ENCODE measurements at regions of chr3 and their contacts with region 1.

Region 1: DNA sequence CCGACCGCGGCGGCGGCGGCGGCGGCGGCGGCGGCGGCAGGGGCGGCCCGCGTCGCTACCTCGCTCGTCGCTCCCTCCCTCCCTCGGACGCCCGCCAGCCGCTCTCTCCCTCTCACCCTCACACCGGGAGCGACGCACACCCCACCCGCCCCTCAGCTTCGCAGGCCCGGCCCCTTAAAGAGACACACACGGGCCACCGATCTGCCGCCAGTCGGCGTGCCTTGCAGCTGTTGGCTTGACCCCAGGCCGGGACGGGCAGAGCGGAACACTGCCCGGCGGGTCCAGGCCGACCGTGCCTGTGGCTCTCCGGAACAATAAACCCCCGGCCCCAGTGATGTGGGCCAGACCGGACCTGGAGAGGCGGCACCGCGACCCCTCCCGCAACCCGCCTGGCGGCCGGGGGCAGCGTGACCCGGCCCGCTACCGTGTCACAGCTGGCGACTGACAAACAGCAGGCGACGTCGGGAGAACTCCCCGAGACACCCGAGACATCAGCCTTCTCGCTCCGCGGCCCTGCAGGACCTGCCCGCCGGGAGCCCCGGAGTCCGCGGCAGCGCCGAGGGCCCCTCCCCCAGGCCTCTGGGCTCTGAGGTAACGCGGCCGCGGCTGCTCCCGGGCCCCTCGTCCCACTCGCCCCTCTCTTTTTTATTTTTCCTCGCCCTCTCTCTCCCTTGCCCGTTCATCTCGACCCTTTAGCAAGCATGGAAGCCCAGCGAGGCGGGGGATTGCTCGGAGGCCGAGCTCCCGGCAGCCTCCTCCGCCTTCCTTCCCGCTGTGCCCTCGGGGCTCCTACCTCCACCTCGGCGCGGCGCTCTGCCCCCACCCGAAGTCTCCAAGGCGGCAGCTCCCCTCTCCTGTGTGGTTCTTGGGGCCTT is at the start of gene SETD2:
- DNase-seq: peak; percentile 90
- H3K4me3 ChIP-seq: peak within 1 kb of the TSS; percentile 58 to 97 (median 88)
- H3K27ac ChIP-seq: peak within 1 kb of the TSS; percentile 78
- H3K4me1 ChIP-seq: peaks cover 19% of the 10 kb centered on the region
- H3K27me3 ChIP-seq: no peaks in the 10 kb centered on the region
- CTCF ChIP-seq: peak in 1 of 2 donors; percentile 21
- POLR2A ChIP-seq: peak; percentile 31
- total RNA-seq, gene SETD2: 36.2 and 41.4 TPM in 2 replicates

Region 2: GRCh38 chr3:47261301-47261700 is 97.1 kb after region 1 on chr3:
- CTCF ChIA-PET with region 1: no interaction called
- POLR2A ChIA-PET with region 1: no interaction called
- dilution Hi-C with region 1: no loop called
- intact Hi-C with region 1: no loop called
- DNase-seq: no peak
- H3K4me3 ChIP-seq: no peak overlapping the region
- H3K27ac ChIP-seq: no peak overlapping the region
- H3K4me1 ChIP-seq: no peaks in the 10 kb centered on the region
- H3K27me3 ChIP-seq: no peaks in the 10 kb centered on the region
- CTCF ChIP-seq: no peak
- POLR2A ChIP-seq: no peak

Region 3: GRCh38 chr3:47282424-47283192 is 118.4 kb after region 1 on chr3 and contains the starts of genes KIF9 and KLHL18:
- CTCF ChIA-PET with region 1: interaction called, 3 read pairs
- POLR2A ChIA-PET with region 1: no interaction called
- dilution Hi-C with region 1: no loop called
- intact Hi-C with region 1: loop called (anchors 1 kb)
- DNase-seq: peak; percentile 91
- H3K4me3 ChIP-seq: peak within 1 kb of the TSS; percentile 63 to 93 (median 82)
- H3K27ac ChIP-seq: peak within 1 kb of the TSS; percentile 80
- H3K4me1 ChIP-seq: peaks cover 7% of the 10 kb centered on the region
- H3K27me3 ChIP-seq: no peaks in the 10 kb centered on the region
- CTCF ChIP-seq: no peak
- POLR2A ChIP-seq: peak; percentile 91
- total RNA-seq, gene KIF9: 20.7 and 22.4 TPM in 2 replicates
- total RNA-seq, gene KLHL18: 43.4 and 47.2 TPM in 2 replicates

Region 4: DNA sequence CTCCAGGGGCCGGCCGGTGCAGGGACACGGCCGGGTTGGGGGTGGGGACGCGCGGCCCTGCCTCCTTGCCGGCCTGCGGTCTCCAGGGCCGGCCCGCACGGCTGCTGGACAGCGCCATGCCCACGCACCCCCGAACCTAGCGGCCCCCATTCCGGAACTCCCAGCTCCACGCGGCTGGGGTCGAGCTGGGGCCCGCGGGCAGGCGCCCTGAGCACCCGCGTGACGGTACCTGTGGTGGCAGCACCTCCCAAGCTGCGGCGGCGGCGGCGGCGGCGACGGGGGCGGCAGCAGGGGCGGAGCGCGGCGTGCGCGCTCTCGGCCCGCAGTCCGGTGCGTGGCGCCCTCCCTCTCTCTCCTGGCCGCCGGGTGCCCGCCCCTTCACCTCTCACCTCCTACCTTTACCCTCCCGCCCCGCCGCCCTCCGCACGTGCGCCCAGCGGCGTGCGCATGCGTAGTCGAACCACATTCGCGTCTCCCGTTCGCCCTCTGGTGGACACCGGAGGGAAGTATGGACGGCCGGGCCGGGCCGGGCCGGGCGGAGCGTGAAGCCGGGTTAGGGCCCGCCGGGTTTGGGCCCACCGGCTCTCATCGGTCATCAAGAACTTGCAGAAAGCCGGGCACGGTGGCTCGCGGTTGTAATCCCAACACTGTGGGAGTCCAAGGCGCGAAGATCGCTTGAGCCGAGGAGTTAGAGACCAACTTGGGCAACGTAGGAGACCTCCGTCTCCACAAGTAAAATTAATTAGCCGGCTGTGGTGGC is 311.5 kb after region 1 on chr3 and contains the start of gene SCAP:
- CTCF ChIA-PET with region 1: no interaction called
- POLR2A ChIA-PET with region 1: no interaction called
- dilution Hi-C with region 1: no loop called
- intact Hi-C with region 1: loop called (anchors 2 kb)
- DNase-seq: peak; percentile 85
- H3K4me3 ChIP-seq: peak within 1 kb of the TSS; percentile 60 to 83 (median 82)
- H3K27ac ChIP-seq: no peak within 1 kb of the TSS
- H3K4me1 ChIP-seq: no peaks in the 10 kb centered on the region
- H3K27me3 ChIP-seq: no peaks in the 10 kb centered on the region
- CTCF ChIP-seq: peak; percentile 84 to 95
- POLR2A ChIP-seq: peak; percentile 15
- total RNA-seq, gene SCAP: 53.6 and 59.0 TPM in 2 replicates

Measured in endothelial cell of umbilical vein (primary cell).